Body of pancreas (tissue), 4 donors: ENCODE measurements at regions of chr3 and their contacts with region 1.

Region 1: GRCh38 chr3:32667122-32667521 is 17.9 kb upstream of the CNOT10 start:
- DNase-seq: no peak
- ATAC-seq: no peak
- H3K4me3 ChIP-seq: no peak overlapping the region
- H3K27ac ChIP-seq: no peak overlapping the region
- H3K4me1 ChIP-seq: no peaks in the 10 kb centered on the region
- H3K27me3 ChIP-seq: no peaks in the 10 kb centered on the region
- CTCF ChIP-seq: no peak
- POLR2A ChIP-seq: no peak

Region 2: DNA sequence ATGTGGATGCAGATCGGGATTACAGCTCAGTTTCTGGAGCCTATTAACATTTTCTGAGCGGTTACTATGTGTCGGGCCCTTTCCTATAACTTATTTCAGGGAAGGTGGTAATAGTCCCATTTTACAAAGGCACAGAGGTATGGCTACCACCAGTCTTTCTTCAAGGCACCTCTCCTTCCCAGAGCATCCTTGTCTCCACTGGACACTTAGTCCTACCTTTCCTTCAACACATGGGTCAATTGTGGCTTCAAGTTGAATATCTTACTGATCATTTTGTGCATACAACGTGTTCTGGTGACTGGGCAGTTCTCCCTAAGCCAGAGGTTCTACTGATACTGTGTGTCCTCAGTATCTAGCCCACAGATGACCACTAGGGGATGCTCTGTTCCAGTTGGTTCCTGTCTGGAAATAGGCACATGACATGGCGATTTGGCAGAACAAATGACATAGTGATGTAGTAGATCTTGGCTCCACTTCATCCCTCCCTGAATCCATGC is 489.4 kb before region 1 on chr3:
- intact Hi-C with region 1: loop called (anchors 10 kb)
- DNase-seq: peak; percentile 84 to 93 (median 86)
- ATAC-seq: peak; percentile 95
- H3K4me3 ChIP-seq: no peak overlapping the region
- H3K27ac ChIP-seq: no peak overlapping the region
- H3K4me1 ChIP-seq: peaks cover 6% of the 10 kb centered on the region
- H3K27me3 ChIP-seq: no peaks in the 10 kb centered on the region
- CTCF ChIP-seq: peak in 6 of 7 experiments; percentile 58 to 97 (median 94)
- POLR2A ChIP-seq: no peak

Region 3: DNA sequence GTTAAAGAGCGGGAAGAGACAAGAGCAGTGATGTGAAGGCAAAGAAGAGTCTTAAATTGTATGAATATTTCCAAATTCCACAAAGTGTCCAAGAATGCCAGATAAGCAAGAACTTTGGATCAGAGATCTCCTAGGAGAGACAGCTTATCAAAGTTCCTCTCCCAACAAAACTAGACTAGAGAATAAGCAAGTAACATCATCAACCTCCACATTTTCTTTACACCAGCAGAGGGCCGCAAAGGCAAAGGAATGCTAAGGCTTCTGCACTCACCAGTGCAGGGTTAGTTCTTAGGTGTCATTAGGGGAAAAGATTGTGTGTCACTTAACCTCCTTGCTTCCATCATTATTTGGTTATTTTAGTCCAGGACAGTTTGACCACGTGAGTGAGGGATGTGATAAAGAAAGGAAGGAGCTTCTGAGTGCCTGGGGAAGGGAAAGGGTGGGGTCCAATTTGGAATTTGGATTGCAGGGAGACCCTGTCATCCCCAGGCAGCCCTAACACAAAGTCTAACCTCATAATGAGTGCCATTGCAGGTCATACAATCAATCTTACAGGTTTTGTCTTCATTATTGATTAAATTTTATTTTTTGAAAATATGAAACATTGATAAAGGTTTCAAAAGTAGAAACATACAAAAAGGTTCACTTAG is 156.9 kb before region 1 on chr3:
- intact Hi-C with region 1: loop called (anchors 5 kb)
- DNase-seq: peak; percentile 61 to 80 (median 72)
- ATAC-seq: peak; percentile 80
- H3K4me3 ChIP-seq: no peak overlapping the region
- H3K27ac ChIP-seq: no peak overlapping the region
- H3K4me1 ChIP-seq: no peaks in the 10 kb centered on the region
- H3K27me3 ChIP-seq: no peaks in the 10 kb centered on the region
- CTCF ChIP-seq: peak; percentile 39 to 93 (median 84)
- POLR2A ChIP-seq: no peak